Activated T-helper 1 cell treated with anti-CD3 and anti-CD28 coated beads, Interleukin-12 subunit alpha, Interleukin-12 subunit beta, Interleukin-2, Interleukin-4 antibody, amounts not matched to agents 30 ng/mL and 10 ng/mL and 1 ng/mL, durations not matched to agents 14 hours and 24 hours and 36 hours (primary cell): ENCODE measurements at regions of chr12 and their contacts with region 1.

Region 1: GRCh38 chr12:75977952-75978671 is 53.5 kb downstream of the PHLDA1 start:
- DNase-seq: peak; percentile 81
- H3K4me3 Mint-ChIP-seq: peak overlapping the region; percentile 38
- H3K27ac Mint-ChIP-seq: peak overlapping the region; percentile 94
- H3K4me1 Mint-ChIP-seq: peaks cover 77% of the 10 kb centered on the region
- H3K27me3 Mint-ChIP-seq: no peaks in the 10 kb centered on the region

Region 2: GRCh38 chr12:75650595-75651341 is 327.3 kb before region 1 on chr12:
- intact Hi-C with region 1: no loop called
- DNase-seq: no peak
- H3K4me3 Mint-ChIP-seq: no peak overlapping the region
- H3K27ac Mint-ChIP-seq: no peak overlapping the region
- H3K4me1 Mint-ChIP-seq: peaks cover 25% of the 10 kb centered on the region
- H3K27me3 Mint-ChIP-seq: peaks cover 9% of the 10 kb centered on the region

Region 3: DNA sequence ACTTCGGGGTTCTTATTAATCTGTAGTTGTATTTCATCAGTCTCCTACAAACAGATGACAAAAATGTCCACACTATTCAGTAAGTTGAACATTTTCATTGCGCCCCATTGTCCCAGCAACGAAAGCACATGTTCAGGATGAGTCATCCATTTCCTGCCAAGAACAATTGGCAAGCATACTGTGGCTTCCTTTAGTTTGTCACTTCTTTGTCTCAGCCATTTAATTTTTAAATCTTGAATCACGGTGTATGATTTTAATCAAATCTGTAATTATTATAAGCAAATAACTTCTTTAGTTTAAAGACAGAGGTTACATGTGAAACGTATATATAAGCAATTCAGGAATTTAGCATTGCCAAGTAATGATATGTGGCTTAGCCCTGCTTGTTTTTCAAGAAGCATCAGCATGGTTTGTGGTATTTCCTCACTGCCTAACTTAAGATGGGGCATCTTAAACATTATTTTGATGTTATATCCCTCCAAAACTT is 255.4 kb before region 1 on chr12:
- intact Hi-C with region 1: loop called (anchors 2 kb)
- DNase-seq: peak; percentile 29
- H3K4me3 Mint-ChIP-seq: peak overlapping the region; percentile 37
- H3K27ac Mint-ChIP-seq: peak overlapping the region; percentile 81
- H3K4me1 Mint-ChIP-seq: peaks cover 16% of the 10 kb centered on the region
- H3K27me3 Mint-ChIP-seq: peaks cover 3% of the 10 kb centered on the region

Region 4: DNA sequence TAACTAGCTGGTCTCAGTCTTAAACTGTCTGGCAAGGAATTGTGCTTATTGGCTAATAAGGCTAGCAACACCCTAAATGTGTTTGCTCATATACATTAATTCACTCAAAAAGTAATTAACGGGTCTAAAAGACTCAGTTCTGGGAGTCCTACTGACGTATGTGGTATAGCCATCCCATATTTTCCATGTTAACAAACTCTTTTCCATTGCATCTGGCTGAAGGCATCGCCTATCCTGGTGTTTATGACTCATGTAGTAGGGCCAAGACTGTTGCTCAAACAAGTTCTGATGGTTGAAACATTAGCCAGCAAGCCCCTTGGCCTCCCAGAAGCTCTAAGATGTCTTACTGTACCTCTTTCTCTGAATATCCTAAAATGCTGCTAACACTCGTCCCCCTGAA is 45.0 kb before region 1 on chr12:
- intact Hi-C with region 1: loop called (anchors 1 kb)
- DNase-seq: no peak
- H3K4me3 Mint-ChIP-seq: no peak overlapping the region
- H3K27ac Mint-ChIP-seq: peak overlapping the region; percentile 89
- H3K4me1 Mint-ChIP-seq: peaks cover 49% of the 10 kb centered on the region
- H3K27me3 Mint-ChIP-seq: peaks cover 4% of the 10 kb centered on the region

Region 5: GRCh38 chr12:75954041-75954440 is 24.1 kb before region 1 on chr12:
- intact Hi-C with region 1: no loop called
- DNase-seq: no peak
- H3K4me3 Mint-ChIP-seq: no peak overlapping the region
- H3K27ac Mint-ChIP-seq: no peak overlapping the region
- H3K4me1 Mint-ChIP-seq: peaks cover 28% of the 10 kb centered on the region
- H3K27me3 Mint-ChIP-seq: peaks cover 4% of the 10 kb centered on the region

Region 6: GRCh38 chr12:75994186-75994731 is 16.1 kb after region 1 on chr12:
- intact Hi-C with region 1: loop called (anchors 1 kb)
- DNase-seq: no peak
- H3K4me3 Mint-ChIP-seq: peak overlapping the region; percentile 5
- H3K27ac Mint-ChIP-seq: peak overlapping the region; percentile 88
- H3K4me1 Mint-ChIP-seq: peaks cover 49% of the 10 kb centered on the region
- H3K27me3 Mint-ChIP-seq: no peaks in the 10 kb centered on the region

Region 7: GRCh38 chr12:76083904-76084862 is 106.1 kb after region 1 on chr12 and contains the start of gene NAP1L1:
- intact Hi-C with region 1: loop called (anchors 2 kb)
- DNase-seq: peak; percentile 96
- H3K4me3 Mint-ChIP-seq: peak within 1 kb of the TSS; percentile 100
- H3K27ac Mint-ChIP-seq: peak within 1 kb of the TSS; percentile 100
- H3K4me1 Mint-ChIP-seq: peaks cover 62% of the 10 kb centered on the region
- H3K27me3 Mint-ChIP-seq: no peaks in the 10 kb centered on the region
- total RNA-seq, gene NAP1L1: 584 and 605 TPM in 2 replicates

Region 8: GRCh38 chr12:77578466-77579220 is 1600.5 kb after region 1 on chr12:
- intact Hi-C with region 1: no loop called
- DNase-seq: no peak
- H3K4me3 Mint-ChIP-seq: no peak overlapping the region
- H3K27ac Mint-ChIP-seq: no peak overlapping the region
- H3K4me1 Mint-ChIP-seq: no peaks in the 10 kb centered on the region
- H3K27me3 Mint-ChIP-seq: no peaks in the 10 kb centered on the region